ENCODE measurements at regions of chr3 and their contacts with region 1.

Region 1: DNA sequence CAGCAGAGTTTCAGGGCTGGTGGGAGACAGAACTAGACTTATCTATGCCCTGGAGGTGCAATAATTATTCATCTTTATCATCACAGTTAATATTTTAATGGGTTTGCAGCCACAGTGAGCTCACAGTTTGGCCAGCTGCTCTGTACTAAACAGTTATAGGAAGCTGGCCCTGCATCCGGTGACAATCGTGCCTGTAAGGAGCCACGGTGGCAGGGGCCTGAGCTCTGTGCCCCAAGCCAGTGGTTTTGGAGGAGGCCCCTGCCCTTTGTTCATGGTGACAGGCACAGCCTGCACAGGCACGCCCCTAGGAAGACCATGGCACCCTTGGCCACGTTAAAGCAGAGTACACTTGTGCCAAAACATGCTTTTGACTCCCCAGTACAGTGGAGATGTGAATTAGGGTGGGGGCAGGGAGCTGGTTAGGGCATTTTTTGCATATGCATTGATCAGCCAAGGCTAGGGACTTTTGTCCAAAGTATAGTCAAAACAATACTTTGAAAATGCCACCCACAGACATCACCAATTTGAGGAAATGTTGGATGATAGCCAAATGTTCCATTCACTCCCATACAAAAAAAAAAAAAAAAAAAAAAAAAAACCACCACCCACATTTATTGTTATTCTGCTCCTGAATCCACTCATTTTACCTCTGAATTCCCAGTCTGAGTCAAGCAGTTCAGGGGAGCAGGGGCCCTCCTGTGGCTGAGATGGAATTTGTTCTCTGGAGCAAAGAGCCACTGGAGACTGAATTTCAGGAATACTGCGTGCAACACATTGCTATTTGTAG is 3.4 kb upstream of the RFTN1 start:
- DNase-seq: peak; percentile 76
- H3K4me3 ChIP-seq: no peak overlapping the region
- H3K27ac ChIP-seq: no peak overlapping the region
- H3K4me1 ChIP-seq: peaks cover 16% of the 10 kb centered on the region
- H3K27me3 ChIP-seq: peaks cover 4% of the 10 kb centered on the region in 2 experiments
- CTCF ChIP-seq: peak; percentile 57 to 66
- POLR2A ChIP-seq: no peak

Region 2: DNA sequence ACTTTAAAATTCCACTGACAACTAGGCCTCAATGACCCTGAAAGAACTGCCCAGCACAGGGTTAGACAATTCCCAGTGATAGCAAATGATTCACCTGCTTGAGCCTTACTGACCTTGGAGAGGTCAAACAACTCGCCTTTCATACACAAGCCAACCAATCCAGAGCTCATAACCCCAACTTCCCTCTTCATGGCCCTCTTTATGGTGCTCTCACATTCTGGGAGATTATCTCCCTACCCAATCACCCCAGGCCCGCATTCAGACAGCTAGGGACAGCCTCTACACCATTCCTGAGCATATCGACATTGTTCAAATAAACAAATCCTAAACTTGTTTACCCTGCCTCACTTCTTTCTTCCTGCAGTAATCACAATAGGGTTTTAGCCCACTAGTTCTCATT is 963.1 kb before region 1 on chr3:
- CTCF ChIA-PET with region 1: no interaction called
- POLR2A ChIA-PET with region 1: no interaction called
- dilution Hi-C with region 1: no loop called
- intact Hi-C with region 1: no loop called
- DNase-seq: no peak
- H3K4me3 ChIP-seq: no peak overlapping the region
- H3K27ac ChIP-seq: no peak overlapping the region
- H3K4me1 ChIP-seq: no peaks in the 10 kb centered on the region
- H3K27me3 ChIP-seq: no peaks in the 10 kb centered on the region
- CTCF ChIP-seq: no peak
- POLR2A ChIP-seq: no peak

Region 3: GRCh38 chr3:16264708-16265454 is 252.0 kb before region 1 on chr3 and contains the starts of genes DPH3 and OXNAD1:
- CTCF ChIA-PET with region 1: interaction called, 13 read pairs
- POLR2A ChIA-PET with region 1: interaction called, 3 read pairs
- dilution Hi-C with region 1: no loop called
- intact Hi-C with region 1: loop called (anchors 1 kb)
- DNase-seq: peak; percentile 99
- H3K4me3 ChIP-seq: peak within 1 kb of the TSS; percentile 66 to 93 (median 72)
- H3K27ac ChIP-seq: peak within 1 kb of the TSS; percentile 82
- H3K4me1 ChIP-seq: peaks cover 23% of the 10 kb centered on the region
- H3K27me3 ChIP-seq: no peaks in the 10 kb centered on the region
- CTCF ChIP-seq: no peak
- POLR2A ChIP-seq: peak; percentile 82
- total RNA-seq, gene DPH3: 28.7 and 29.6 TPM in 2 replicates
- total RNA-seq, gene OXNAD1: 8.9 and 9.7 TPM in 2 replicates

Region 4: GRCh38 chr3:16309558-16309957 is 207.3 kb before region 1 on chr3:
- CTCF ChIA-PET with region 1: interaction called, 13 read pairs
- POLR2A ChIA-PET with region 1: no interaction called
- dilution Hi-C with region 1: no loop called
- intact Hi-C with region 1: loop called (anchors 5 kb)
- DNase-seq: peak; percentile 53
- H3K4me3 ChIP-seq: no peak overlapping the region
- H3K27ac ChIP-seq: no peak overlapping the region
- H3K4me1 ChIP-seq: peaks cover 4% of the 10 kb centered on the region
- H3K27me3 ChIP-seq: no peaks in the 10 kb centered on the region
- CTCF ChIP-seq: no peak
- POLR2A ChIP-seq: no peak

Region 5: DNA sequence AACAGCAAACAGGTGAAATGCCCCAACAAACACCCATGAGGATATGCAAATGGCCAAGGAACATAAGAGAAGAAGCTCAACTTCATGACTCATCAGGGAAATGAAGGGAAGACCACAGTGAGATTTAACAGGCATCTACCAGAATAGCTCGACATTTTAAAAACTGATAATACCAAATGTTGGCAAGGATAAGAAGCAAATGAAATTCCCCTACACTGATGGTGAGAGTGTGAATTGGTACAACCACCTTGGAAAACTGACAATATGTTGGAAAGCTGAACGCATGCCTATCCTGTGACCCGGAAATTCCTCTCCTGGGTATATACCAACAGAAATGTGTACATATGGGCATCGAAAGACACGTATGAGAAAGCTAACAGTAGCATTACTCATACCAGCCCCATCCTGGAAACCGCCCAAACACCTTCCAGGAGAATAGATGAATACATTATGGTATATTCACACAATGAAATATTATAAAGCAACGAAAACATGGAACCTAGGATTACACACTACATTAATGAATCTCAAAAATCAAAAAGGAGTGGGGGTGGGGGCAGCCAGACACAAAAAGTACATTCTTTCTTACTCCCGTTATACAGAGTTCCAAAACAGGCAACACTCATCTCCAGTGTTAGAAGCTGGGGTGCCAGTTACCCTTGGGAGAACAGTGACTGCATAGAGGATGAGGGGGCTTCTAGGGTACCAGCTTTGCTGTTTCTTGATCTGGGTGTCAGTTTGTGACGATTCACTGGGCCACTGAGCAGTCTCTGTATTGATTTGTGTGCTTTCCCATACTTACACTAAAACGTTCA is 20.3 kb before region 1 on chr3:
- CTCF ChIA-PET with region 1: interaction called, 10 read pairs
- POLR2A ChIA-PET with region 1: no interaction called
- dilution Hi-C with region 1: no loop called
- intact Hi-C with region 1: loop called (anchors 1 kb)
- DNase-seq: no peak
- H3K4me3 ChIP-seq: no peak overlapping the region
- H3K27ac ChIP-seq: no peak overlapping the region
- H3K4me1 ChIP-seq: peaks cover 28% of the 10 kb centered on the region
- H3K27me3 ChIP-seq: no peaks in the 10 kb centered on the region
- CTCF ChIP-seq: no peak
- POLR2A ChIP-seq: no peak

Region 6: DNA sequence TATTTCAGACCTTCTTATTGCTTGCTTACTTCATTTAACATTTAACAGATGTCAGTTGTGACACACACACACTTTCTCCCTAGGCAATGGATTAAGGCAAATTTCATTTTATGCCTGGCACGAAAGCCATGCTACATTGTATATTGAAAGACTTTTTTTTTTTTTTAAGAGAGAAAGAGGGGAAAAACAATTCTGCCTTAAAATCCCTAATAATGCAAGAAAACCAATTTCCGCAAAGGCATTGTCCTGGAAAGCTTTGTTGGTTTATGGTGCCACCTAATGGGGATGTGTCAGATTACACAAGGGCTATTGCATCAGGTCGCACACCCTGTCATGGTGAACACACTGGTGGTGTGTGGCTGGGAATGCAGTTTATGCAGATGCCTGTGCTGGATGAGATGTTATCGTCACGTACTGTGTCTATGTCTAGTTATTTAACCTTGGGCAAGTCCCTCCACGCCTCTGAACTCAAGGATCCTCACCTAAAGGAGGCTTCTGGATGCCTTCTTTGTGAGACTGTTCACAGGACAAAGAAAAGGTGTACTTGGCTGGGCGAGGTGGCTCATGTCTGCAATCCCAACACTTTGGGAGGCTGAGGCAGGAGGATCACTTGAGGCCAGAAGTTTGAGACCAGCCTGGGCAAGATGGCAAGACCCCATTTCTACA is 33.9 kb after region 1 on chr3:
- CTCF ChIA-PET with region 1: interaction called, 22 read pairs
- POLR2A ChIA-PET with region 1: no interaction called
- dilution Hi-C with region 1: no loop called
- intact Hi-C with region 1: loop called (anchors 1 kb)
- DNase-seq: peak; percentile 87
- H3K4me3 ChIP-seq: no peak overlapping the region
- H3K27ac ChIP-seq: no peak overlapping the region
- H3K4me1 ChIP-seq: peaks cover 6% of the 10 kb centered on the region
- H3K27me3 ChIP-seq: peaks cover 3 to 4% of the 10 kb centered on the region in 2 experiments
- CTCF ChIP-seq: peak; percentile 72 to 88
- POLR2A ChIP-seq: no peak